ENCODE measurements at regions of chr11 and their contacts with region 1.

Region 1: GRCh38 chr11:31240338-31240904 is 129.1 kb downstream of the DCDC1 start:
- DNase-seq: peak; percentile 29
- H3K4me3 ChIP-seq: no peak overlapping the region
- H3K27ac ChIP-seq: no peak overlapping the region
- H3K4me1 ChIP-seq: no peaks in the 10 kb centered on the region
- H3K27me3 ChIP-seq: no peaks in the 10 kb centered on the region
- CTCF ChIP-seq: peak; percentile 61 to 72

Region 2: DNA sequence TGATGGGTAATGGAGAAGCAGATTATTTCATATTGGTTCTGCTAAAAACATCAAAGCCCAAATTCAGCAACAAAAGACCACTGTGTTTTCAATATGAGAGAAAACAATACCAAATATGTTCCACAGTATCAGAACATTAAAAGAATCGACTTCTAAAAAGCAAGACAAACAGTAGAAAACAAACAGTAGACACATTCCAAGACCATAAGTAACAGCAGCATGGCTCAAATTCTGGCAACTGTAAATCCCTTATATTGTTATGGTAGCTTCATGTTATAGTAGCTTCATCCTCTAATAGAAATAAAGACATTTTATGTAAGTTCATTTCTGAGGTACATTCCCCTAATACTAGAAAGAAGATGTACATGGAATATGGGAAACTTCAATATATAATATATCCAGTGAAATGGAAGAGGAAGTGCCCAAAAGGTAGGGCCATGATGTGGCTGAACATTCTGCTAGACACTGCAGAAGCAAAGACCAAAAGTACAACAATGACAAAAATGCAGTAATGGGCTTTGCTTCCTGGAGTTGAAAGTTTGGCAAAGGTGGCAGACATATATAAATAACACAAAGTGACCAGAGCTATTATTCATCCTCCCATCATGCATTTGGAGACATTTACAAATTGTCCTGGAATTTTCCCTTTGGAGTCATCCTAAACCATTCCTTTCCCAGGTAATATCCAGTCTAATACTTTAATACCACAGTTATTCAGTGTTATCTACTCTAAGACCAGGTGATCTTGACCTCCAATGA is 170.8 kb before region 1 on chr11:
- CTCF ChIA-PET with region 1: no interaction called
- dilution Hi-C with region 1: no loop called
- in situ Hi-C with region 1: no loop called
- intact Hi-C with region 1: no loop called
- DNase-seq: no peak
- H3K4me3 ChIP-seq: no peak overlapping the region
- H3K27ac ChIP-seq: no peak overlapping the region
- H3K4me1 ChIP-seq: no peaks in the 10 kb centered on the region
- H3K27me3 ChIP-seq: no peaks in the 10 kb centered on the region
- CTCF ChIP-seq: no peak

Region 3: GRCh38 chr11:31118566-31118965 is 121.9 kb before region 1 on chr11:
- CTCF ChIA-PET with region 1: no interaction called
- dilution Hi-C with region 1: no loop called
- in situ Hi-C with region 1: no loop called
- intact Hi-C with region 1: no loop called
- DNase-seq: no peak
- H3K4me3 ChIP-seq: no peak overlapping the region
- H3K27ac ChIP-seq: no peak overlapping the region
- H3K4me1 ChIP-seq: no peaks in the 10 kb centered on the region
- H3K27me3 ChIP-seq: no peaks in the 10 kb centered on the region
- CTCF ChIP-seq: no peak

Region 4: DNA sequence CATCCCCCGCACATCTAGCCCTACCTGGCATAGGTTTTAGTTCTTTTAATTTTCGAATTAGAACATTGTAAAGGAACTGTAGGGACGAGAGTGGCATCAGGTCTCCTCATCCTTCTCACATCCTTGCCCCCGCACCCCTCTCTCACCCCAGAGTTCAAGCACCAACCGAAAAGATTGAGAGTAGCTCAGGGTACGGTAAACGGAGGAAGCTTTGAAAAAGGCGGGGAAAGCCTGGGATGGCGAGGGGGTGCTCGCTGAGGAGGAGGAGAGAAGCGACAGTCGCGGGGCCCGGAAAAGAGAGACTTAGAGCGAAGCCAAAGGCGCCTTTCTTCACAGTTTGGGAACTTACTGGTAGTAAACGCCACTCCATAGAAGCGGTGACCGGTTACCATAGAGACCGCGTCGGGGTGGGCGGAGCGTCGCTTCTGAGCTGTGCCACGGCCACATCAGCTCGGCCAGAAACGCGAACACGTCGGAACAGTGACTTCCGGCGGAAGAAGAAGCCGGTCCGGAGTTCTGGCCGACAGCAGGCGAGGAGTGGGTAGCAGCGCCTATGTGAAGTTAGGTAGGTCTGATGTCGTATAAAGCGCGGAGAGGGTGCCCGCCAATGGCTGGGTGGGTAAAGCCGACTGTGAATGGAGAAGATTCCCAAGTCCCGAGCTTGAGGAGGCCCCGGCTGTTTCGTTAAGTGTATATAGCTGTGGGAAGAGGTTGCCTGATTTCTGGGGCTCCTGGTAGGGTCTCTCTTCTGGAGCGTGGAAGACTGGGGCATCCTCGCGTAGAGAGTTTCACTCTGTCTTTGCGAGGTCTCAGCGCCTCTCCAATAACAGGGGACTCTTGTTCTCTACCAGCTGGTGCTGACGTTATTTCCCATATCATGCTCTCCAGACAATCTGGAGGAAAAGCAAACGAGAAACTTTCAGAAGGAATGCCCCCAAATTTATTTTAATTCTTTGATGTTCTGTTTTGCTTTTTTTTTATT is 129.2 kb after region 1 on chr11 and contains the starts of genes DCDC1 and DNAJC24:
- CTCF ChIA-PET with region 1: no interaction called
- dilution Hi-C with region 1: no loop called
- in situ Hi-C with region 1: no loop called
- intact Hi-C with region 1: loop called (anchors 1 kb)
- DNase-seq: peak; percentile 86
- H3K4me3 ChIP-seq: peak within 1 kb of the TSS; percentile 68 to 100 (median 97)
- H3K27ac ChIP-seq: peak within 1 kb of the TSS; percentile 93
- H3K4me1 ChIP-seq: peaks cover 3% of the 10 kb centered on the region
- H3K27me3 ChIP-seq: no peaks in the 10 kb centered on the region
- CTCF ChIP-seq: no peak
- total RNA-seq, gene DCDC1: 0.33 TPM in 1 of 2 donors, not detected in the other
- total RNA-seq, gene DNAJC24: 22.2 to 22.7 TPM

Region 5: DNA sequence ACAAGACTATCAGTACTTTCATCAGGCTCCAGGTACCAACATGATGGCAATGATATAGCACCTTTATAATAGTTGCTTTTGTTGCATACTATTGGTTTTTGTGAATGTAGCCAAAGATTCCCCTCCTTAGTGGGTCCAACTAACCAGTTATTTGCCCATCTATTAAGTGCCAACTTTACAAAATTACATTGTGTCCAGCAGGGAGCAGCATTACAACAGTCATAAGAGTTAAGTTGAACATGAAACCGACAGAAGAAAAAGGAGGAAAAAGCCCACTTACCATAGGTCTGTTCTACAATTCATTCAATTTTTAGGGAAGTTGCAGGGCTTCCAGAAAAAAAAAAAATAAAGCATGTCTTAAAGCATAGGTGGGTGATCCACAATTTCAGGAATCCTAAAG is 247.4 kb after region 1 on chr11:
- CTCF ChIA-PET with region 1: no interaction called
- dilution Hi-C with region 1: no loop called
- in situ Hi-C with region 1: no loop called
- intact Hi-C with region 1: loop called (anchors 10 kb)
- DNase-seq: peak; percentile 18
- H3K4me3 ChIP-seq: no peak overlapping the region
- H3K27ac ChIP-seq: no peak overlapping the region
- H3K4me1 ChIP-seq: no peaks in the 10 kb centered on the region
- H3K27me3 ChIP-seq: no peaks in the 10 kb centered on the region
- CTCF ChIP-seq: peak; percentile 27 to 48

Region 6: DNA sequence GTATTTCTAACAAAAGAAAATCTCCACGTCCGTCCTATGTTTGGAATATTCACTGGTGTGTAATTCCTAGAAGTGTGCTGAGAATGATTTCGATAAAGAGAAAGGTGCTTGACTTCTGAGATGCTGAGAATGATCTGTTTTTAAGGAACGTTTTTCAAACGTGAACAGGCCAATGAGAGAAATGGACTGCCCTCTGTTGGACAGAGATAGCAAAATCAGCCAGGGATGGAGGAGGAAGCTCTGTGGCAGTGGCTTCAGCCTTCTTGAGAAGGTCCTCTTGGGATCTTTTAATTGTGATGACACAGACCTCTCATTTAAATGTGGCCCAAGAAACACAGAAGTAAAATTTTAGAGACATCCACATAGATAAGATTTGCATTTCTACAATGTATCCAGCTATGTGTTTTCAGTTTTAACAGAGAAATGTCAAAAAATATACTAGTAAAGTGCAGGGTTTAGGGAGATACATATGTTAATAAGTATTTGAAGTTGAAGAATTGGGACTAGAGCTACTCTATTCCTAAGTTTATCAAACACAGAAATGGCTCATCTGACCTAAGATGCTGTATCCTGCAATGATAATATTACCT is 766.5 kb after region 1 on chr11:
- CTCF ChIA-PET with region 1: no interaction called
- dilution Hi-C with region 1: no loop called
- in situ Hi-C with region 1: no loop called
- intact Hi-C with region 1: loop called (anchors 5 kb)
- DNase-seq: peak; percentile 38
- H3K4me3 ChIP-seq: no peak overlapping the region
- H3K27ac ChIP-seq: no peak overlapping the region
- H3K4me1 ChIP-seq: peaks cover 8% of the 10 kb centered on the region
- H3K27me3 ChIP-seq: no peaks in the 10 kb centered on the region
- CTCF ChIP-seq: peak; percentile 62 to 85

Region 7: DNA sequence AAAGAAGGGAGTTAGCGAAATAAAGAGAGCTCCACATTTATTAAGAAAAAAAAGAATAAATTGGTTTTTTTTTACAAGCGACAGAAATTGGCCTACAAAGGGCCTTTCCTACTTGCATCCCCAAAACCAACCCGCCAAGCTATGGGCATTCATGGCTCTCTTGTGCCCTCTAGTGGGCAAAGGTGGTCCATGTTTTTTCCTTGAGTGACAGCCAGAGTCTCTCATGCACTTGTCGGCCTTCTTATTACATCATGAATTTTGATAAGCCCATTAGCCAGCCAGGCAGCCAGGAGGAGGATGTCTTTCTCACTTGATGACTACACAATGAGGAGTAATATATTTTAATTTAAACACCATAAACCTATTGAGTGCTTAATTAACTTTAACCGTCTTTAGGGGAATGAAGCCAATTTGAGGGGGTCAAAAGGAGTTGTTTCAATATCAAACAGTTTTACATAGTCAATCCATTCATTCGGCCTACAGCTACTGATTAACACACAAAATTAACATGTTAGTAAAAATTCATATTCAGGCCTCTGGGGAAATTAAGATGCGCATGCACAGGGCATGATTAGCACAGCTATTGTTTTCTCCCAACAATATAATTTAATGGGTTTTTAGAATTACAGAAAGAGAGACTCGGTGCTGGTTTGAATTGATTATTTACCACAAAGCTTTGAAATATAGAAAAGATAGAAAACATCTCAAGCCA is 936.0 kb after region 1 on chr11:
- CTCF ChIA-PET with region 1: no interaction called
- dilution Hi-C with region 1: no loop called
- in situ Hi-C with region 1: loop called (anchors 10 to 25 kb)
- intact Hi-C with region 1: loop called (anchors 1 kb)
- DNase-seq: peak; percentile 72
- H3K4me3 ChIP-seq: no peak overlapping the region
- H3K27ac ChIP-seq: no peak overlapping the region
- H3K4me1 ChIP-seq: peaks cover 4% of the 10 kb centered on the region
- H3K27me3 ChIP-seq: peaks cover 2% of the 10 kb centered on the region
- CTCF ChIP-seq: peak; percentile 88 to 89

Measured in mammary epithelial cell (primary cell).